Heart right ventricle (tissue), 16 donors: ENCODE measurements at regions of chr1 and their contacts with region 1.

Region 1: DNA sequence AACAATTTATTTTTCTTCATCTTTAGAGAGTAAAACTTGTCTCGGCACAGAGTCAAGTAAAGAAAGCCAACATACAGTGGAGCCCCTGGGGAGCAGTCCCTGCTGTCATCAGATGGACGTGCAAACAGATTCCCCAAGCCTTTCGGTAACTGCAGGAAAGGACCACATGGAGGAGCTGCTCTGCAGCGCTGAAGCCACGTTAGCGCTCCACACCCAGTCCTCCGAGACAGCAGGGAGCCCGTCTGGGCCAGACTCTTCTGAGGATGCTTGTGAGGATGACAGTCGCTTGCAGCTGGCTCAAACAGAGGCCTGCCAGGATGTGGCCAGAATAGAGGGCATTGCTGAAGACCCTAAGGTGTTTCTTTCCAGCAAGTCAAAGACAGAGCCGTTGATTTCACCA is 77.1 kb upstream of the SCCPDH start:
- DNase-seq: peak; percentile 69 to 76
- ATAC-seq: peak; percentile 91 to 97 (median 95)
- H3K4me3 ChIP-seq: peak overlapping the region in 9 of 10 donors; percentile 9 to 53 (median 37)
- H3K27ac ChIP-seq: peak overlapping the region in 8 of 10 donors; percentile 21 to 76 (median 60)
- H3K4me1 ChIP-seq: peaks cover 0 to 32% (median 12%) of the 10 kb centered on the region in 9 donors
- H3K27me3 ChIP-seq: no peaks in the 10 kb centered on the region
- CTCF ChIP-seq: peak; percentile 35 to 79 (median 66)

Region 2: GRCh38 chr1:246632281-246633087 is 14.6 kb before region 1 on chr1:
- intact Hi-C with region 1: no loop called
- DNase-seq: no peak
- ATAC-seq: no peak
- H3K4me3 ChIP-seq: no peak overlapping the region
- H3K27ac ChIP-seq: no peak overlapping the region
- H3K4me1 ChIP-seq: no peaks in the 10 kb centered on the region
- H3K27me3 ChIP-seq: no peaks in the 10 kb centered on the region
- CTCF ChIP-seq: no peak

Region 3: DNA sequence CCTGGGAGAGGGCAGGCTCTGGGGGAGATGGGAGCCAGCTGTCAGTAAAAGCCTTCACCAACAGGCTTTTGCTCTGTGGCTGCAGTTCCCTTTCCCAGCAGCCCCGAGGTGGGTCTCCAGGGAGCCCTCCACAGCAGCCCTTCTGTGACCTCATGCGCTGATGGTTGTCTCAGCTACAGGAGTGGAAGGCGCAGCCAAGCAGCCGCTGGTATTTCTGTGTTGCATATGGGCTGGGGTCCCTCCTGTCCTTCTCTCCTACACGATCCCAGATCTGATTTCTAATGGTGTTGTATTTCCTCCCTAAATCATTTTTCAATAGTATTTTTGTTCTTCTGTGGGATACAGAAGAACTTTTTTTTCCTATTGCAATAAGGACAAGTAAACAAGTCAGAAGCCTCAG is 34.8 kb after region 1 on chr1:
- intact Hi-C with region 1: loop called in 2 of 10 experiments (anchors 5 kb)
- DNase-seq: peak; percentile 72 to 74
- ATAC-seq: peak; percentile 74 to 90 (median 80)
- H3K4me3 ChIP-seq: no peak overlapping the region
- H3K27ac ChIP-seq: peak overlapping the region; percentile 60 to 81 (median 66)
- H3K4me1 ChIP-seq: peaks cover 0 to 48% (median 17%) of the 10 kb centered on the region in 9 donors
- H3K27me3 ChIP-seq: no peaks in the 10 kb centered on the region
- CTCF ChIP-seq: no peak

Region 4: DNA sequence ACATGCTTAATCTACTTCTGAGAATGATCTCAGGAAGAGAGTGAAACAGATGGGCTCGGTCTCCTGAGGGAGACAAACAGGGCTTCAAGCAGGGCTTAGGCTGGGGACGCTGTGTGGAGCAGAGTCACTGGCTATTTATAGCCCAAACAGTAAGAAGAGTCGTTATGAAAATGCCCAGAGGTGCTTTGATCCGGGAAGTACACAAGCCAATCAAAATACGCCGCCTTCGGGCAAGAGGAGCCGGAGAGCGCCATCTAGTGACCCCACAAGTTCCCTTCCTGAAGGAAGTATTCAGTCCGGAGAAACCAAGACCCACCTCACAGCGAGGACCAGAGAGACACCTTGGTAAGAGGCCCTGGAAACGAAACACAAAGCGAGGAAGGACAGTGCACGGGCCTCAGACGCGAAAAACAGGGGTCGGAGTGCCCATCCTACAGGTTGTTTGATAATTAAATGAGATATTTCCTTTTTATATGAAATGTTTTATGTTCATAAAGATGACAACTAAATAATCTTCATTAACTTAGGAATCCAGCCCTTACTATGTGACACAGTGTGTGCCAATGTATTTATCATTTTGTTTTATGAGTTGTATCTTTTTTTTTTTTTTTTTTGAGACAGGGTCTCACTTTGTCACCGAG is 52.1 kb after region 1 on chr1:
- intact Hi-C with region 1: loop called in 6 of 10 experiments (anchors 2 to 10 kb)
- DNase-seq: peak; percentile 81 to 92
- ATAC-seq: peak; percentile 88 to 97 (median 92)
- H3K4me3 ChIP-seq: peak overlapping the region in 8 of 10 donors; percentile 4 to 45 (median 34)
- H3K27ac ChIP-seq: peak overlapping the region in 9 of 10 donors; percentile 18 to 87 (median 49)
- H3K4me1 ChIP-seq: peaks cover 3 to 26% (median 10%) of the 10 kb centered on the region in 9 donors
- H3K27me3 ChIP-seq: no peaks in the 10 kb centered on the region
- CTCF ChIP-seq: peak; percentile 74 to 96 (median 91)